Transverse colon (tissue), 4 donors: ENCODE measurements at regions of chr18 and their contacts with region 1.

Region 1: GRCh38 chr18:70907673-70908072 is 618.8 kb downstream of the SOCS6 start:
- DNase-seq: no peak
- H3K4me3 ChIP-seq: no peak overlapping the region
- H3K27ac ChIP-seq: no peak overlapping the region
- H3K4me1 ChIP-seq: no peaks in the 10 kb centered on the region
- H3K27me3 ChIP-seq: no peaks in the 10 kb centered on the region
- CTCF ChIP-seq: no peak
- EP300 ChIP-seq: no peak
- POLR2A ChIP-seq: no peak

Region 2: DNA sequence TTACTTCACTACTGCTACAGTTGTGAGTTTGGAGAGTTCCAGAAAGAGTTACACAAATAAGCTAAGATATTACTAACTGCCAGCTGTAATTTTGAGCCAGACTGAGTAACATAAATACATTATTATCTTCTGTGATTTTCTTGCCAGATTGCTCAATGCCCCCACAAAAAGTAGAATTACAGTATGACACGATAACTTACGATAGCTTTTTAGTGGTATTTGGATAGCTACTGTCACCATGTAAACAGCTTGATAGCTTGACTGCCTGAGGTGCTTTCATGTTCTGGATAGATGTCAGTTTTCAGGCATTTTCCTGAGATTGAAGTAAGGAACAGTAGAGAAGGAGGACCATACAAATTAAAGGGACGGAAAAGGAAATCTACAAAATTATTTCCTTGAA is 85.6 kb before region 1 on chr18:
- in situ Hi-C with region 1: loop called in 1 of 4 experiments (anchors 25 kb)
- intact Hi-C with region 1: no loop called
- DNase-seq: no peak
- H3K4me3 ChIP-seq: no peak overlapping the region
- H3K27ac ChIP-seq: no peak overlapping the region
- H3K4me1 ChIP-seq: no peaks in the 10 kb centered on the region
- H3K27me3 ChIP-seq: no peaks in the 10 kb centered on the region
- CTCF ChIP-seq: no peak
- EP300 ChIP-seq: no peak
- POLR2A ChIP-seq: no peak

Region 3: GRCh38 chr18:71665131-71665530 is 757.5 kb after region 1 on chr18:
- in situ Hi-C with region 1: no loop called
- intact Hi-C with region 1: no loop called
- DNase-seq: no peak
- H3K4me3 ChIP-seq: no peak overlapping the region
- H3K27ac ChIP-seq: no peak overlapping the region
- H3K4me1 ChIP-seq: no peaks in the 10 kb centered on the region
- H3K27me3 ChIP-seq: no peaks in the 10 kb centered on the region
- CTCF ChIP-seq: no peak
- EP300 ChIP-seq: no peak
- POLR2A ChIP-seq: no peak